ENCODE measurements at regions of chr16 and their contacts with region 1.

Region 1: DNA sequence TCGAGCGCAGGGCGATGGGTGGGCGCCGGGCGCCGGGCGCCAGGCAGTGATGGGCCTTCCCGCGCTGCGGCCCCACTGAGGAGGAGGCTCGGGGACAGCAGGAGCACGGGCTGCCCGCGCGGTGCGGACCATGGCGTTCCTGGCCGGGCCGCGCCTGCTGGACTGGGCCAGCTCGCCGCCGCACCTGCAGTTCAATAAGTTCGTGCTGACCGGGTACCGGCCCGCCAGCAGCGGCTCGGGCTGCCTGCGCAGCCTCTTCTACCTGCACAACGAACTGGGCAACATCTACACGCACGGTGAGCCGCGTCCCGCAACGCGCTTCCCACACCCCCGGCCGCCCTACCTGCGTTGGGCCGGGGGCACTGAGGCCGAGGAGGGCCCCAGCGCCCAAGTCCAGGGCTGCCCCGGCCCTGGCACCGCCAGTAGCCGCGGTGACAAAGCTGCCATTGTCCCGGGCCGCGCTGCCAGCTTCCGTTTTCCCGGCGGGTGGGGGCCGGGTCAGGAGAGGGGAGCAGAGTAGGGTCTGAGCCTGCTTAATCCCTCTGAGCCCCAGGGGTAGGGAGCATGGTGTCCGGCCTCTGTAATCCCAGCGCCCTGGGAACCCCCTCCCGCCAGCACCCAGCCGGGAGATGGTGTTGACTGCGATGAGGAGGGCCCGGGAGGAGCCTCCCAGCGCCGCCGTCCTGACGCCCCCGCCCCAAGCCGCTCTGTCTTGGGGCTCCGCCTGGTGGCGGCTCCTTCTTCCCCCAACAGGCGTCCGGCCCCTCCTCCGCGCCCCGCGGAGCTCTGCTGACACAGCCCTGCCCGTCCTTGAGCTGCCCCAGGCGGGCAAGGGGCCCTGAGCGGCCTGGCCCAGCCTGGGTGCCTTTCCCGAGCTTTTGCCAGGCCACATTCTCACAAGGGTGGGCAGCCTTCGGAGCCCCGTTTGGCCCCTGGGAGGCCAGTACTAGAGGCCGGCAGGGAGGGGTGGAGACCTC is 685 bp downstream of the PAQR4 start:
- DNase-seq: peak; percentile 95
- H3K4me3 Mint-ChIP-seq: peak overlapping the region; percentile 84
- H3K27ac Mint-ChIP-seq: peak overlapping the region; percentile 76
- H3K4me1 Mint-ChIP-seq: peaks cover 21% of the 10 kb centered on the region
- H3K27me3 Mint-ChIP-seq: peaks cover 14% of the 10 kb centered on the region

Region 2: DNA sequence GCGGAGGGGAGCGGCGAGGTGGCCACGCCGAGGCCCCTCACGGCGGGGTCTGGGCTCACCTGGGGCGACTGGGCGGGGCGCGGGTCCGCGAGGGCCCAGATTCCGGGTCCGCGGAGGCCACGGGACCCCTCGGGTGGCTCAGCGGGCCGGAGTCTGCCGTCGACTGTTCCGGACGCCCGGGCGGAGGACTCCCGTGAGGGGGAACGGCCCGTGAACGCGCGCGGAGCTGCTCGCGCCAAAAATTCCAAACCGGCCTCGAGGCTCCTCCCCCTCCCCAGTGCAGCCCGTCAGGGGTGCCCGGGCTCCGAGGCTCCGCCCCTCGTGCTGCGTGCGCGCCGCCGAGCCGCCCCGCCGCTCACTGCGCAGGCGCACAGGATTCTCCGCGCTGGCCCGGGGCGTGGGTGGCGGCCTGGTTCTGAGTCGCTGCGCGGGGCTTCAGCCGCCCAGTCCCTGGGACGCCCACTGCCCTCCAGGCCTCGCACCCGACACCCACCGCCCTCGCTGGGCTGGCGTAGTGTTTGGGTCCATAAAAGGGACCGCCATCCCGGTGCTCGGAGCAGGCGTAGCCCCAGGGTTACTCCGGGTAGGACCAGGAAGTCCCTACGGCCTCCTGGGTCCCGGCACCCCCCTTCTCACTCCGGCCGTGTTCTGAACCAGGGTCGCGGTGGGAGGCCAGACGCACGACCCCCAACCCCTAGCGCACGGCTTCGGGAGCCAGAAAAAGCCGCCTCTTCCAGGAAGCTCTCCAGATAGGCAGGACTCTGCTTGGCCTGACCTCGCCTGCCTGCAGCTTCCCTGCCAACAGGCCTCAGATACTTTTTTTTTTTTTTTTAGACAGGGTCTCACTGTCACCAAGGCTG is 10.6 kb after region 1 on chr16 and contains the start of gene PKMYT1:
- intact Hi-C with region 1: loop called (anchors 1 kb)
- DNase-seq: peak; percentile 99
- H3K4me3 Mint-ChIP-seq: peak within 1 kb of the TSS; percentile 95
- H3K27ac Mint-ChIP-seq: peak within 1 kb of the TSS; percentile 85
- H3K4me1 Mint-ChIP-seq: peaks cover 22% of the 10 kb centered on the region
- H3K27me3 Mint-ChIP-seq: peaks cover 6% of the 10 kb centered on the region
- total RNA-seq, gene PKMYT1: 152 TPM in 2 replicates

Region 3: DNA sequence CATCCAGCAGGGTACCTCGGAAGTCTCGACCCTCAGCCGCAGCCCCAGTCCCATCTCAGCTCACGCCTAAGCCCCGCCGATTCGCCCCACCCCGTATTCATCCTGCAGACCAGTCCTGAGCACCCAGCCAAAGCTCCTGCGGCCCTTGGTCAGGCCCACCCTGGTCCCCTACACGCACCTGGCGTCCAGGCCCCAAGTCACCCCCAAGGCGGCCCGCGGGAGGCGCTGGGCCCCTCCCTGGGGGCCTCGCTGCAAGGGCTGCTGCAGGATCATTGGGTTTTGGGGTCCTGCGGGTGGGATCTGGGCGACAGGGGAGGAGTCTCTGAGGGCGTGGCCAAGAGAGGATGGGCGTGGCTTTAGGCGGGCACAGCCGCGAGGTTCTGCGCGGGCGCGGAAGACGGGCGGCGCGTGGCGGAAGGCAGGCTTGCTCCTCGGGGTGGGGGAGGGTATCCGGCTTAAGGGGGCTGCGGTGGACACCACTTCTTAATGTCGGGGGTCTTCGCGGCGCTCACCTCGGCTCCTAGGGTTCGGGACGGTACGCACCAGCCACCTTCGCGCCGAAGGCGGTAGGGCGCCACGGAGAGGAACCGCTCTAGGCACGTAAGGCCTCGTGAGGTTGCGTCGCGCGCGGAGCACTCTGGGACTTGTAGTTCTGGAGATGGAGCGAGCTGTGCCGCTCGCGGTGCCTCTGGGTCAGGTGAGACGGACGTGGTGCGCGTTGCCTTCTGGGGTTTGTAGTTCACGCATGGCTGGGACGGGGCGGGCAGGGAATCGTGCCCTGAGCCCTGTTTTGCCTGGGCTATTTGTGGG is 54.0 kb after region 1 on chr16 and contains the starts of genes HCFC1R1 and THOC6:
- intact Hi-C with region 1: loop called (anchors 2 kb)
- DNase-seq: peak; percentile 99
- H3K4me3 Mint-ChIP-seq: peak within 1 kb of the TSS; percentile 83
- H3K27ac Mint-ChIP-seq: peak within 1 kb of the TSS; percentile 95
- H3K4me1 Mint-ChIP-seq: peaks cover 45% of the 10 kb centered on the region
- H3K27me3 Mint-ChIP-seq: peaks cover 2% of the 10 kb centered on the region
- total RNA-seq, gene HCFC1R1: 29.4 TPM in 2 replicates
- total RNA-seq, gene THOC6: 55.3 and 57.0 TPM in 2 replicates

Measured in activated CD4-positive, alpha-beta T cell treated with anti-CD3 and anti-CD28 coated beads, Interleukin-2, amount 10 ng/mL, durations not matched to agents 24 days and 14 days (primary cell).